ENCODE measurements at regions of chr13 and their contacts with region 1.

Region 1: GRCh38 chr13:81540777-81541176 is 1199.9 kb upstream of the SPRY2 start:
- DNase-seq: peak; percentile 28
- H3K4me3 Mint-ChIP-seq: no peak overlapping the region
- H3K27ac Mint-ChIP-seq: no peak overlapping the region
- H3K4me1 Mint-ChIP-seq: peaks cover 8% of the 10 kb centered on the region
- H3K27me3 Mint-ChIP-seq: no peaks in the 10 kb centered on the region
- CTCF ChIP-seq: peak; percentile 41

Region 2: DNA sequence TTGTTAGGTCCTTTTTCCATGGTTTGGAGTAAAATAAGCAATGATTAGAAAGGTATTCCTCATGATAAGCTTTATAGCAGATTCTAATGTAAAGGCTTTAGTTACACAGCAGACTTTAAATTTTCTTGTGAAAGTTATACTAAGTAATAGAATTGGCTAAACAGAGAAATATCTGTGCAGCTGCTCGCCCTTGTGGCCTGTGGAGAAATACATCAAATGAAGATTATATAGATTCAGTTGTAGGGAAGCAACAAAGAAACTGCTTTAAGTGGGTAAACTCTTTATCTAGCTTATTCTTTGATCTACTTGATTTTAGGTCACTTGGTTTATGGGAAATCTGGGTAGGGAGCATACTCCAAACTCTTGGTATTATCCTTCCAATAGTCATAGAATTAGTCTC is 69.9 kb after region 1 on chr13:
- CTCF ChIA-PET with region 1: interaction called, 22 read pairs
- POLR2A ChIA-PET with region 1: no interaction called
- intact Hi-C with region 1: no loop called
- DNase-seq: no peak
- H3K4me3 Mint-ChIP-seq: no peak overlapping the region
- H3K27ac Mint-ChIP-seq: no peak overlapping the region
- H3K4me1 Mint-ChIP-seq: no peaks in the 10 kb centered on the region
- H3K27me3 Mint-ChIP-seq: no peaks in the 10 kb centered on the region
- CTCF ChIP-seq: no peak